Naive thymus-derived CD4-positive, alpha-beta T cell (primary cell): ENCODE measurements at regions of chr1 and their contacts with region 1.

Region 1: GRCh38 chr1:20194757-20195461 is 8.6 kb upstream of the PLA2G2C start:
- DNase-seq: peak; percentile 43 to 76 (median 63)
- ATAC-seq: peak; percentile 81
- H3K4me3 ChIP-seq: no peak overlapping the region
- H3K4me3 Mint-ChIP-seq: no peak overlapping the region
- H3K27ac ChIP-seq: no peak overlapping the region
- H3K27ac Mint-ChIP-seq: no peak overlapping the region
- H3K4me1 ChIP-seq: no peaks in the 10 kb centered on the region
- H3K4me1 Mint-ChIP-seq: peaks cover 0 to 7% (median 0%) of the 10 kb centered on the region in 7 donors
- H3K27me3 ChIP-seq: no peaks in the 10 kb centered on the region
- H3K27me3 Mint-ChIP-seq: peaks cover 0 to 36% (median 5%) of the 10 kb centered on the region in 5 donors

Region 2: DNA sequence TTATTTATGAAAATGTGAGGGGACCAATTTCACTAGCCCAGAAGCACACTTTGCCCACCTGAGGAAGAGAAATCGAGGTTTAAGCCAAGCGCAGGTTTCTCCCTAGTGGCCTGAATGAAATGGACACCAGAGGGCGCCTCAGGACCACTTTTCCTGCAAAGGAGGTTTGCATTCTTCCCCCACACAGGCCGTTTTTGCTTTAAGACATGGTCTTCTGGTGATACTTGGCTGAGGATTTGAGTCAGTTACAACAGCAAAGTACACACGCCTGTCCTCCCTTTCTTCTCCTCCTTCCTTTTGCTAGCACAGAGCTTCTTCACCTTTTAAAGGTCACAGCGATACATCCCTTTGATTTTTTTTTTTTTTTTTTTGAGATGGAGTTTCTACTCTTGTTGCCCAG is 276.9 kb before region 1 on chr1:
- CTCF ChIA-PET with region 1: interaction called, 20 read pairs
- POLR2A ChIA-PET with region 1: no interaction called
- intact Hi-C with region 1: loop called in 1 of 2 experiments (anchors 1 kb)
- DNase-seq: peak; percentile 49 to 81 (median 73)
- ATAC-seq: peak; percentile 75
- H3K4me3 ChIP-seq: no peak overlapping the region
- H3K4me3 Mint-ChIP-seq: peak overlapping the region in 1 of 10 donors; percentile 42
- H3K27ac ChIP-seq: no peak overlapping the region
- H3K27ac Mint-ChIP-seq: no peak overlapping the region
- H3K4me1 ChIP-seq: no peaks in the 10 kb centered on the region
- H3K4me1 Mint-ChIP-seq: peaks cover 0 to 5% (median 0%) of the 10 kb centered on the region in 7 donors
- H3K27me3 ChIP-seq: no peaks in the 10 kb centered on the region
- H3K27me3 Mint-ChIP-seq: peaks cover 0 to 6% (median 0%) of the 10 kb centered on the region in 5 donors

Region 3: GRCh38 chr1:19974822-19975416 is 220.0 kb before region 1 on chr1:
- CTCF ChIA-PET with region 1: no interaction called
- POLR2A ChIA-PET with region 1: no interaction called
- intact Hi-C with region 1: loop called in 1 of 2 experiments (anchors 1 kb)
- DNase-seq: peak in 4 of 9 donors; percentile 9 to 25 (median 16)
- ATAC-seq: peak; percentile 47
- H3K4me3 ChIP-seq: no peak overlapping the region
- H3K4me3 Mint-ChIP-seq: no peak overlapping the region
- H3K27ac ChIP-seq: no peak overlapping the region
- H3K27ac Mint-ChIP-seq: no peak overlapping the region
- H3K4me1 ChIP-seq: no peaks in the 10 kb centered on the region
- H3K4me1 Mint-ChIP-seq: peaks cover 0 to 2% (median 0%) of the 10 kb centered on the region in 7 donors
- H3K27me3 ChIP-seq: no peaks in the 10 kb centered on the region
- H3K27me3 Mint-ChIP-seq: peaks cover 12 to 35% (median 28%) of the 10 kb centered on the region in 5 donors

Region 4: DNA sequence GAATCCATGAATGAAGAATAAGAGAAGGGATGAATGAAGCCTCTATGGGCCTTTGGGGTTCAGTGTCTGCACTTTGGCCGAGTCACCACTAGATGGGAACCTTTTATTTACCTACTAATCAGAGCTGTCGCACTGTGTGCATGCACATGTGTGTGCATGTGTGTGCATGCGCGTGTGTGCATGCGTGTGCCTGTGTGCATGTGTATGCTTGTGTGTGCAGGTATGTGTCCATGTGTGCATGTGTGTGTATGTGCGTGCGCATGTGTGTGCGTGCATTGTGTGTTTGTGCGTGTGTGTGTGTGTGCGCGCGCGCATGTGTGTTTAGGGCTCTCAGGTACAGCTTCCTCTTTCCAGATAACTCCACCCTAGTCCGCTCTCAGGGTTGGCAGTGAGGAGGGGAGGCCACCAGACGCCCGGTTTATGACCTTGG is 29.4 kb before region 1 on chr1:
- CTCF ChIA-PET with region 1: interaction called, 3 read pairs
- POLR2A ChIA-PET with region 1: no interaction called
- intact Hi-C with region 1: loop called (anchors 1 to 2 kb)
- DNase-seq: no peak
- ATAC-seq: no peak
- H3K4me3 ChIP-seq: no peak overlapping the region
- H3K4me3 Mint-ChIP-seq: no peak overlapping the region
- H3K27ac ChIP-seq: no peak overlapping the region
- H3K27ac Mint-ChIP-seq: no peak overlapping the region
- H3K4me1 ChIP-seq: no peaks in the 10 kb centered on the region
- H3K4me1 Mint-ChIP-seq: peaks cover 0 to 7% (median 0%) of the 10 kb centered on the region in 7 donors
- H3K27me3 ChIP-seq: no peaks in the 10 kb centered on the region
- H3K27me3 Mint-ChIP-seq: peaks cover 0 to 9% (median 4%) of the 10 kb centered on the region in 5 donors